Activated CD8-positive, alpha-beta T cell treated with anti-CD3 and anti-CD28 coated beads for 36 hours (primary cell): ENCODE measurements at regions of chr9 and their contacts with region 1.

Region 1: DNA sequence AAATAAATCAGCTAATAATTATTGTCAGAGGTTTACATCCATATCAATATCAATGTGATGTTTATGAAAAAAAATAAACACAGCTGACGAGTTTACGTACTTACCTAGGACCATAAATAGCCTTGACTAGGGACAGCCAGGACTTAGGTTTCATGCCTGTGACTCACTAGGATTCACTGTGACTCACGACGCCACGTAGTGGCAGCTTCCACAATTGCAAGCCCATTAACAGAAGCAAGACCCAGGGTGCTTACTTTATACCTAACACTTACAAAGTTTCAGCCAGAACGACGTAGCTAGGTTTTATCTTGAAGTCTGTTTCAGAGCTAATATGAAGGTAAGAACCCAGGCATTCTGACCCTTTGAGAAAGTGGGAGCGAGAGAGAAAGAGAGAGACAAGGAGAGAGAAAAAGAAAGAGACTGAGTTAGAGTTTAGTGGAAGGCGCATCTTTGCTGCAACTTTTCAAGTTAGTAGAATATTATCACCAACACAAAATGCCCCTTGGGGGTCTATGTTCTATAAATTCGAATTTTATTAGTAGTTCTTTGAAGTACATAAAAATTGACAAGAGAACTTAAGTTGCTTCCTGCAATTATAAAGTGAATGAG is 191.2 kb downstream of the GNA14 start:
- DNase-seq: peak; percentile 95
- ATAC-seq: peak; percentile 93
- H3K4me3 Mint-ChIP-seq: no peak overlapping the region
- H3K27ac Mint-ChIP-seq: no peak overlapping the region
- H3K4me1 Mint-ChIP-seq: peaks cover 13% of the 10 kb centered on the region
- H3K27me3 Mint-ChIP-seq: no peaks in the 10 kb centered on the region
- CTCF ChIP-seq: peak; percentile 84

Region 2: GRCh38 chr9:77163884-77164283 is 293.0 kb before region 1 on chr9:
- CTCF ChIA-PET with region 1: interaction called, 12 read pairs
- POLR2A ChIA-PET with region 1: no interaction called
- intact Hi-C with region 1: no loop called
- DNase-seq: no peak
- ATAC-seq: no peak
- H3K4me3 Mint-ChIP-seq: no peak overlapping the region
- H3K27ac Mint-ChIP-seq: no peak overlapping the region
- H3K4me1 Mint-ChIP-seq: no peaks in the 10 kb centered on the region
- H3K27me3 Mint-ChIP-seq: peaks cover 2% of the 10 kb centered on the region
- CTCF ChIP-seq: no peak

Region 3: DNA sequence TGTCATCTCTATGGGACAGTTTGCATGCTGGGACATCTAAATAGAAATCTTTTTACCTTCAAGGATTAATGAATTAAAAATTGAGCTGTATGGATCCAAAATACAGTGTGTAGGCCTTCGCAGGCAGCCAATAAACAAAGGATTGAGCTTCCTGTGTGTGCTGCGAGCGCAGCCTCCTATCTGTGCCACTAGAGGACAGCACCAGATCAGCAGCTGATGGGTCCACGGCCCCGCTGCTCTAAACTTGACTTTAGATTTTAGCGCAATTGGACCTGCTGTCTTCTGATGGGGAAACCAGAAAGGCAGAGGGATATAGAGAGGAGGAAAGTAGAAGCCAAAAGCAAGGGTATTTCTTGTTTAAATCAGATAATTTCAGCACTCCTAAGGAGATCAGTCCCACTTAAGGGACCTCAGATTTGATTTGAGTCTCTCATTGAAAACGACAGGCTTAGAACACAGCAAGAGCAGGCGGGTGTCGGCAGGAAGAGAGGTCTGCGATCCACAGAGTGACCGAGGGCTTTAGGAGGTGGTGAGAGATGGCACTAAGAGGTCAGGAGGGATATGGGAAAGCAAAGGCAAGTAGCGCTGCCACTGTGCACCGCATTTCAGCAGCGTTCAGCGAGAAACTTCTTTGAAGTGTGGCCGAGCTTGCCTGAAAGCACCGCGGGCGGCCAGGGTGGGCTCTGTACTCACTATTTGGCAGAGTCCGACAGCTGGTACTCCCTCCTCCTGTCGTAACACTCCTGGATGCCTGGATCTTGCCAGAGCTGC is 23.1 kb before region 1 on chr9:
- CTCF ChIA-PET with region 1: interaction called, 44 read pairs
- POLR2A ChIA-PET with region 1: interaction called, 3 read pairs
- intact Hi-C with region 1: no loop called
- DNase-seq: peak; percentile 73
- ATAC-seq: peak; percentile 92
- H3K4me3 Mint-ChIP-seq: no peak overlapping the region
- H3K27ac Mint-ChIP-seq: no peak overlapping the region
- H3K4me1 Mint-ChIP-seq: peaks cover 4% of the 10 kb centered on the region
- H3K27me3 Mint-ChIP-seq: peaks cover 1% of the 10 kb centered on the region
- CTCF ChIP-seq: peak; percentile 89

Region 4: GRCh38 chr9:77469515-77470231 is 12.7 kb after region 1 on chr9:
- CTCF ChIA-PET with region 1: interaction called, 115 read pairs
- POLR2A ChIA-PET with region 1: interaction called, 3 read pairs
- intact Hi-C with region 1: no loop called
- DNase-seq: no peak
- ATAC-seq: no peak
- H3K4me3 Mint-ChIP-seq: no peak overlapping the region
- H3K27ac Mint-ChIP-seq: no peak overlapping the region
- H3K4me1 Mint-ChIP-seq: no peaks in the 10 kb centered on the region
- H3K27me3 Mint-ChIP-seq: no peaks in the 10 kb centered on the region
- CTCF ChIP-seq: no peak

Region 5: DNA sequence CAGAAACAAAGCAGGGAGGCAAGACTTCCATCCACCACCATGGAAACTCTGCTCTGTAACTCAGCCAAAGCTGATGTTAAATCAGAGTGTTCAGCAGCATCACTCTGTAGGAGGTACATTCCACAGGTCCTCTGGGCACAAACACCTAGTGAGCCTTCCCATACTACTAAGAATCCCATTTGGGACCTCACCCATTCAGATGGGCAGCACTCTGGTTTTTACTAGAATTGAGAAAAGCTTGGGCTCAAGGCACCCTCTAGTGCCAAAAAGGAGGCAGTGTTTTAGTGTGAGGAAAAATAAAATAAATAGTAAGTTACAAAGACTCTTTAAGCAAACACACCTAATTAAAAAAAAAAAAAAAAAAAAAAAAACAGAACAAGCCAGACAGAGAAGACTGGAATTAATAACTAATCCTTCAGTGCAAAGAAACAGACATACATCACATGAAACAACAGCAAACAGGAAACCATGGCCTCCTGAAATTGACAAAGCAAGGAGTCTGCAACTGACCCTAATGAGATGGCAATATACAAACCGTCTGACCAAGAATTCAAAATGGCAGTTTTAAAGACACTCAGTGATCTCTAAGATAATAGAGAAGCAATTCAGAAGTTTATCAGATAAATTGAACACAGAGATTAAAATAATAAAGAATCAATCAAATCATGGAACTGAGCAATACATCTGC is 31.6 kb after region 1 on chr9:
- CTCF ChIA-PET with region 1: interaction called, 141 read pairs
- POLR2A ChIA-PET with region 1: no interaction called
- intact Hi-C with region 1: no loop called
- DNase-seq: peak; percentile 3
- ATAC-seq: peak; percentile 62
- H3K4me3 Mint-ChIP-seq: peak overlapping the region; percentile 81
- H3K27ac Mint-ChIP-seq: peak overlapping the region; percentile 57
- H3K4me1 Mint-ChIP-seq: peaks cover 13% of the 10 kb centered on the region
- H3K27me3 Mint-ChIP-seq: peaks cover 7% of the 10 kb centered on the region
- CTCF ChIP-seq: peak; percentile 60

Region 6: DNA sequence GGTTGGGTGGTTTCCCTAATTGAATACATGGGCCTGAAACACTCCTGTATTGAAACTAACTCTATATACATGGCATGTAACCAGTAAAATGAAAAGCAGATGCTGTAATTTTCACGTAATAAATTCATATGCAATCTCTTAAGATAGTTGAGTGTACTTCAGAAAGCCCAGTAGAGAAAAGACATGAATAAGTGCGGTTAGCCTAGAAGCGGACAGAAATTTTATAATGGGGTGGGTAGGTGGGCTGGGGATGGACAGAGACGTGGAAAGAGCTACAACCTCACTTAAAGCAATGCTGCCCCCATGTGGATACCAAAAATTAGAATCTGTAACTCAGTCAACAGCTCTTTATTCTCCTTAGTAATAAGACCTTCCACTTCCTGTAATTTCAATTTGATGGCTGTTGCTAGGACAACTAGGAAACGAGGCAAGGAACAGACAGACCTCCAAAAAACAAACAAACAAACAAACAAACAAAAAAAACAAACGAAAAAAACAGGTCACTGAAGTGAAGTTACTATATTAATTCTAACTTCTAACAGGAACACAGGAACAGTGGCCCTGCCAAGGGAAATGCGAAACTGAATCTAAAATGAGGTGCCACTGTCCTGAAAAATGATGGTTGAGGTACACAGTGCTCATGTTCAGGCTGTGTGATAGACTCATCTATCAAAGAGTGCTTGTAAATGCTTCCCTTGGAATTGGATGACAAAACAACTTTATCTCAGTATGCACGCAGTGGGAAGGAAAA is 294.6 kb after region 1 on chr9:
- CTCF ChIA-PET with region 1: interaction called, 28 read pairs
- POLR2A ChIA-PET with region 1: no interaction called
- intact Hi-C with region 1: loop called (anchors 2 kb)
- DNase-seq: peak; percentile 37
- ATAC-seq: peak; percentile 57
- H3K4me3 Mint-ChIP-seq: no peak overlapping the region
- H3K27ac Mint-ChIP-seq: no peak overlapping the region
- H3K4me1 Mint-ChIP-seq: peaks cover 39% of the 10 kb centered on the region
- H3K27me3 Mint-ChIP-seq: no peaks in the 10 kb centered on the region
- CTCF ChIP-seq: peak; percentile 59